Activated naive CD4-positive, alpha-beta T cell treated with anti-CD3 and anti-CD28 coated beads for 36 hours (primary cell): ENCODE measurements at regions of chr9 and their contacts with region 1.

Region 1: GRCh38 chr9:96854073-96854876 is at the start of gene ZNF782:
- DNase-seq: peak; percentile 91
- H3K4me3 Mint-ChIP-seq: peak within 1 kb of the TSS; percentile 100
- H3K27ac Mint-ChIP-seq: peak within 1 kb of the TSS; percentile 97
- H3K4me1 Mint-ChIP-seq: peaks cover 35% of the 10 kb centered on the region
- H3K27me3 Mint-ChIP-seq: peaks cover 8% of the 10 kb centered on the region
- total RNA-seq, gene ZNF782: 2.2 to 2.8 TPM

Region 2: GRCh38 chr9:96100385-96101300 is 753.6 kb before region 1 on chr9:
- CTCF ChIA-PET with region 1: no interaction called
- intact Hi-C with region 1: no loop called
- DNase-seq: peak; percentile 32
- H3K4me3 Mint-ChIP-seq: no peak overlapping the region
- H3K27ac Mint-ChIP-seq: no peak overlapping the region
- H3K4me1 Mint-ChIP-seq: peaks cover 5% of the 10 kb centered on the region
- H3K27me3 Mint-ChIP-seq: no peaks in the 10 kb centered on the region

Region 3: GRCh38 chr9:96327694-96328352 is 526.5 kb before region 1 on chr9:
- CTCF ChIA-PET with region 1: no interaction called
- intact Hi-C with region 1: loop called (anchors 5 kb)
- DNase-seq: peak; percentile 70
- H3K4me3 Mint-ChIP-seq: no peak overlapping the region
- H3K27ac Mint-ChIP-seq: no peak overlapping the region
- H3K4me1 Mint-ChIP-seq: no peaks in the 10 kb centered on the region
- H3K27me3 Mint-ChIP-seq: no peaks in the 10 kb centered on the region

Region 4: GRCh38 chr9:96555567-96556386 is 298.5 kb before region 1 on chr9:
- CTCF ChIA-PET with region 1: no interaction called
- intact Hi-C with region 1: no loop called
- DNase-seq: no peak
- H3K4me3 Mint-ChIP-seq: no peak overlapping the region
- H3K27ac Mint-ChIP-seq: no peak overlapping the region
- H3K4me1 Mint-ChIP-seq: peaks cover 36% of the 10 kb centered on the region
- H3K27me3 Mint-ChIP-seq: no peaks in the 10 kb centered on the region

Region 5: DNA sequence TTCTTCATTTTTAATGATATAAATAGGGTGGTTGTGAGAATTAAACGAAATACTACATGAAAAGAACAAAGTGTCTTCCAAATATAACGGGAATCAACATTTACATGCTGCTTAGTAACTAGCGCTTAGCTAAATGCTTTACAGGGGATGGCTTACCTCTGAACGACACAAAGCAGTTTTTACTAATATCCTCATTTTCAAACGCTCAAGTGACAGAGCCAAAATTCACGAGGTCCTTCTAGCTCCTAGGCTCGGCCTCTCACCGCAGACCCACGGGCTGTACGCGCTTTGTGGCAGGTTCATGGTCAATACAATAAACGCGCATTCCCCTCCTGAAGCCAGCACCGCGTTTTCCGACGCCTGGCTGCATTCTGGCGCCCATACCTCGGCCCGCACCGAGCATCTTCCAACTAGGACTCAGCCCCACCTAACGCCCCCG is 76.8 kb before region 1 on chr9:
- CTCF ChIA-PET with region 1: interaction called, 6 read pairs
- intact Hi-C with region 1: loop called (anchors 1 kb)
- DNase-seq: no peak
- H3K4me3 Mint-ChIP-seq: peak overlapping the region; percentile 100
- H3K27ac Mint-ChIP-seq: peak overlapping the region; percentile 96
- H3K4me1 Mint-ChIP-seq: peaks cover 32% of the 10 kb centered on the region
- H3K27me3 Mint-ChIP-seq: no peaks in the 10 kb centered on the region

Region 6: DNA sequence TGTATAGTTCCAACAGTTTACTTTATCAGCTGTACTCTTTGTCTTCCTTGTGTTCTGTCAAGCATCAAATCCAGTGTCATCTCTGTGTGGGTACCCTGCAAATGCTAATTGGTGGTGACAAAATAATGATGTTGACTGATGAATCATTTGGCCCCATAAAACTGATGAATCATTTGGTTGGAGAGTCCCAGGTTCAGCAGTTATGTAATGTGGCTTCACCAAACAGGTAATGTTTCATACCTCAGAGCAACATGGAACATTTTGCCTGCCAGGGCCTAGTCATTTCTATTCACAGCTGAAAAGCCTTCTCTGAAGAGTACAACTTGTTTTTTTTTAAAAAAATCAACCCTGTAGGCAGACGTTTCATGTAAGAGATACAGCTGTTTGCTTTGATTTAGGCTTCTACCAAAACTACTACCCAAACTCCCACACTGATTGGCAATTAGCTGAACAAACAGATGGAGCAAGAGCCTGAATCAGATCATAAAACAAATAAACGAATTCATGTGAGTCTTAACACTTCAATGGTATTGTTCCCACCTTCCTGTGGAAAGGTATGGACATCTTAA is 208.2 kb after region 1 on chr9:
- CTCF ChIA-PET with region 1: no interaction called
- intact Hi-C with region 1: loop called (anchors 1 kb)
- DNase-seq: peak; percentile 82
- H3K4me3 Mint-ChIP-seq: no peak overlapping the region
- H3K27ac Mint-ChIP-seq: peak overlapping the region; percentile 85
- H3K4me1 Mint-ChIP-seq: peaks cover 15% of the 10 kb centered on the region
- H3K27me3 Mint-ChIP-seq: peaks cover 7% of the 10 kb centered on the region

Region 7: DNA sequence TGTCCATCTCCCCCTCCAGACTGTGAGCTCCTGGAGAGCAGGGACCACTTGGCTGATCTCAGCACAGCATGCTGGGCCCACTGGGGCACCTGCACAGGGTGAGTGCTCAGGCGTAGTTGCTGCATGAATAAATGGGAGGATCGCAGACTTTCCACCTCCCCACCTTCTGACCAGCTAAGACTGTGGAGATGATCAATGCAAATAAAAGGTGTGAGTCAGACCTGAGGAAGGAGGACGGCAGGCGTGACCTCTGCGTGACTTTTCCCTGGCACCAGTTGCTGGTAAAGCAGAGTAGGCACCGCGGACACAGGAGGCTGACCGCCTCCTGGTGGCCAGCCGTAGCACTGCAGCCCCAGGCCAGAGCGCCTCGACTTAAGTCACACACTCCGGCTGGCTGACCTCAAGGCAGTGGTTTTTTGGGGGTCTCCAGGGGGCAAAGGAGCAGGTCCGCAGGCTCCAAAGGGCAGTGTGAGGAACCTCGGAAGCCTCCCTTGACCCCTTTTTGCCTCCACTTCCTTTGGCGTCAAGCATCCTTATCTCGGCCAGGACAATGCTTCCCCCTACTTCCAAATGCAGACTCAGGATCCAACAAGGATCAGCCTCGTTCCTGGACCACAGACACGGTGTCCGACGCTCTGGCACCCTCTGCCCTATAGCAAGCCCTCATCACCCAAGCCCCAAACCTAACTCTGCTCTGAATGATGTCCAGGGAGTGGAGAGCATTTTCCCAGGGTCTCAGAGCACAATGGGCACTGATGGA is 544.9 kb after region 1 on chr9:
- CTCF ChIA-PET with region 1: interaction called, 14 read pairs
- intact Hi-C with region 1: loop called (anchors 1 kb)
- DNase-seq: peak; percentile 71
- H3K4me3 Mint-ChIP-seq: no peak overlapping the region
- H3K27ac Mint-ChIP-seq: no peak overlapping the region
- H3K4me1 Mint-ChIP-seq: peaks cover 6% of the 10 kb centered on the region
- H3K27me3 Mint-ChIP-seq: peaks cover 6% of the 10 kb centered on the region

Region 8: GRCh38 chr9:97853844-97854695 is 999.8 kb after region 1 on chr9:
- CTCF ChIA-PET with region 1: no interaction called
- intact Hi-C with region 1: loop called (anchors 10 kb)
- DNase-seq: peak; percentile 78
- H3K4me3 Mint-ChIP-seq: peak overlapping the region; percentile 87
- H3K27ac Mint-ChIP-seq: peak overlapping the region; percentile 16
- H3K4me1 Mint-ChIP-seq: peaks cover 36% of the 10 kb centered on the region
- H3K27me3 Mint-ChIP-seq: peaks cover 74% of the 10 kb centered on the region